ENCODE measurements at regions of chr17 and their contacts with region 1.

Region 1: GRCh38 chr17:6413065-6413464 is 21.9 kb downstream of the AIPL1 start:
- DNase-seq: peak; percentile 70
- CTCF ChIP-seq: peak; percentile 35

Region 2: GRCh38 chr17:5592382-5592781 is 820.7 kb before region 1 on chr17:
- in situ Hi-C with region 1: loop called (anchors 10 kb)
- DNase-seq: peak; percentile 48
- CTCF ChIP-seq: peak; percentile 63

Region 3: GRCh38 chr17:6323582-6324356 is 89.3 kb before region 1 on chr17:
- in situ Hi-C with region 1: no loop called
- DNase-seq: no peak
- CTCF ChIP-seq: no peak

Region 4: DNA sequence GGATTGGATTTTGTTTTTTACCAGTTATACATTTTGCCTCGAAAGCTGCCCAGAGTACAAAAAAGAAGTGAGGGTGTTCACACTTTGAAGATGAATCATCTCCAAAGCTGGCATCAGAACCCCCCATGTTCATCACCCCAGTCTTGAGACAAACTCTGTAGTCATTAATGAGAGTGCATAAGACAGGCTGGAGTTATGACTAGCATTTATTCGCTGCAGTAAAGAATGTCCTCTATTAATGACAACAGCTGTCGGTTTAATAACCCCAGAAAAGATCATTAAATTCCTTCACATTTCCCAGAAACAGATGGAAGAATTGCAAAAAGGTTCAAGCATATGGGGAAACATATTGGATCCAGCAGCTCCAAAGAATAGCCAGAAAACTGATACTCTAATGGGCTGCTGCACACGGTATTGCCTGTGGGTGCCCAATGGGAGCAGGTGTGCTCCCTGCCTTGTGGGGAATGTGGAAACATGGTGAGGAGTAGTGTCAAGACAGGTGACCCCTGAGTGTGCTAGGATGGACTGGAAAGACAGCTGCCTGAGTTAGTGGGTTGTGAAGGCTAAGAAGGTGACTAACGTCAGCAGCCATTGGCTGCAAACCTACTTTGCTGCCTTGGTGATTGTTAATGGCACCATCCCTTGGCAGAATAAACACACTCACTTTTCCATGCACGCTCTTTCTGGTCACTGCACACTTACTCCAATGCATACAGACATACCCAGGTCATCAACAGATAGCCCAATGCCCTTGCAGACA is 60.1 kb before region 1 on chr17:
- in situ Hi-C with region 1: no loop called
- DNase-seq: no peak
- CTCF ChIP-seq: no peak

Region 5: DNA sequence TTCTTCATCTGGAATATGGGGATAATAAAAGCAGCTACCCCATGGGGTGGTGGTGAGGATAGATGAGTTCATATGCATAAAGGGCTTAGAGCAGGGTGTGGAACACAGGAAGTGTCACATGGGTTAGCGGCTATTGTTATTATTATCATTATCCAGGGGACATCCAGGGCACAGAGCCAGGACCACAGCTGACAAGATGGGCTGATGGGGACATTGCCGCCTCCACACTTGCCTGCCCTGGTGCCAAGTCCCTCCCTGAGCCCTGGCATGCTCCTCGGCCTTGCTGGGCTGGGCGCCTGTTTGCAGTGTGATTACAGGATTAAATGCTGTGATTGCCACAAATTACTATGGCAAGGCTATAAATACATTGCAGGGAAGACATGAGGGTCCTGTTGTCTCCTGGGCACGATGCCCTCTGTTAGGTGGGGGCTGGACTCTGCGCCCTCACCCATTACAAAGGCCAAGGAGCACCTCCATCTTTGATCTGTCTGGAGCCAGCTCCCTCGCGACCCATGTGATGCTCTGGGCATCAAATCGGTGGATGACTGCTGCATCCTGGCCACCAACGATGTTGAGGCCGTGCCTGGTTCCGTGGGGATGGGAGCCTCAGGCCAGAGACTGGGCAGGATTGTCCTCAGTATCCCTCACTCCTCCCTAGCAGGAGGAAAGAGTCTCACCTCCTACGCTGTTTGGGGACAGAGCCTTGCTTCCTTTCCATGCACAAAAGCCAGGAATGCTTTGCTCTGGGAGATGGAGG is 74.4 kb after region 1 on chr17:
- in situ Hi-C with region 1: no loop called
- DNase-seq: no peak
- CTCF ChIP-seq: no peak

Region 6: DNA sequence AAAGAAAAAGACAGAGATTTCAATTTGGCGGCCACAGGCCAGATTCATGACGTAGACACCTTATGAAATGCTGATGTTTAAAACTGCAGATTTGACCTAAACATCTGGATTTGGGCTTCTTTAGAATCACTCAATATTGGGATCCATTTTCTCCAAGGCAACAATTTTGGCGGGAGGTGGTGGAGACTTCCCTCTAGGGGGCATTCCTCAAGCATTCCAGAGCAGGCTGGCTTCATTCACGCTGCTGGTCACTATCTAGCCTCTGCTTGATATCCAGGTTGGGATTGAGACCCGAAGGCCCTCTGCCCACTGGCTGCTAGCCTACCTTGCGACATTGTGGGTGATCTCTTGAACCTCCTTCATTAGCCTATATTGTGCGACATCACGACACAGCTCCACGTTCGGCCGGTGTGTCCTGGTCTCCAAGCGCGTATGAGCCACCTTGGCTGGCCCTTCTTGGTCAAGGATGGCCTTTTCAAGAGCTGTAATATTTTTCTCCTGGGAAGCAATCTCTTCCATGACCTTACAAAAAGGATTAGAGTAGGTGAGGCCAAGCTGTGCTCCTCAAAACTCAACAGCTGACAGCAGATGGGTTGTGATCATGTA is 387.5 kb after region 1 on chr17:
- in situ Hi-C with region 1: no loop called
- DNase-seq: no peak
- CTCF ChIP-seq: no peak